ENCODE measurements at regions of chr14 and their contacts with region 1.

Region 1: DNA sequence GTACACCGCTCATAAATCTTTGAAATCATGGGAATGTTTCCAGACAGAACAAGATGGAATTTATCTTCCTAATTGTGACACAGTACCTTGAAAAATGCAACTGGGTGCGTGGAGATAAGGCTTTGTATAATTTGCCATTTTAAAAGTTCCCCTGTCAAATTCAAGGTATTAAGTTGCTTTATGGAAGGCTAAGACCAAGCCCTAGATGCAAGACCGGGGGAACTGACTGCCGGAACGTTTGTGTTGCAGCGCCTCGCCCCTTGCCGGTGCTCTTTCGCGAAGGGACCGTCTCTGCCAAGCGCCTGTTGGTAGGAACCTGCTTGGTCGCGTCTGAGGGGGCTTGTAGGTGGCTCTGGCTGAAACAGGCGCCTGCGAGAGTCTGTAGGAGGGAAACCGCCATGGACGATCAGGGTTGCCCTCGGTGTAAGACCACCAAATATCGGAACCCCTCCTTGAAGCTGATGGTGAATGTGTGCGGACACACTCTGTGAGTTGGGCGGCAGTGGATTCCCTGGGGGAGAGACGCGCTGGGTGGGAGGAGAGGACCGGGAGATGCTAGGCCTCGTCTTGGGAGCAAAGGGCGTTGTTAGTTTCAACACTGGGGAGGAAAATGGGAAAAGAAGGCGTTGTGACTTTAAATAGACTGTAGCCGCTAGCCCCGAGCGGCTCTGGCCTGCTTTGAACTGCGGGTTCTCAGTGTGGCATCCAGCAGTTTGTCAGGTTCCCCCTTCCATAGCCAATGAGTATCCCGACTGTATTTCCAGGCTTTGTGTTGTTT is at the start of gene MNAT1:
- DNase-seq: peak; percentile 88
- ATAC-seq: peak; percentile 96
- H3K4me3 ChIP-seq: peak within 1 kb of the TSS; percentile 99
- H3K27ac ChIP-seq: peak within 1 kb of the TSS; percentile 94
- H3K4me1 ChIP-seq: peaks cover 3% of the 10 kb centered on the region
- H3K27me3 ChIP-seq: no peaks in the 10 kb centered on the region
- CTCF ChIP-seq: no peak
- POLR2A ChIP-seq: peak; percentile 63; the same call in 1 of the 2 replicates
- RAD21 ChIP-seq: peak; percentile 41
- total RNA-seq, gene MNAT1: 48.2 and 53.9 TPM in 2 replicates

Region 2: DNA sequence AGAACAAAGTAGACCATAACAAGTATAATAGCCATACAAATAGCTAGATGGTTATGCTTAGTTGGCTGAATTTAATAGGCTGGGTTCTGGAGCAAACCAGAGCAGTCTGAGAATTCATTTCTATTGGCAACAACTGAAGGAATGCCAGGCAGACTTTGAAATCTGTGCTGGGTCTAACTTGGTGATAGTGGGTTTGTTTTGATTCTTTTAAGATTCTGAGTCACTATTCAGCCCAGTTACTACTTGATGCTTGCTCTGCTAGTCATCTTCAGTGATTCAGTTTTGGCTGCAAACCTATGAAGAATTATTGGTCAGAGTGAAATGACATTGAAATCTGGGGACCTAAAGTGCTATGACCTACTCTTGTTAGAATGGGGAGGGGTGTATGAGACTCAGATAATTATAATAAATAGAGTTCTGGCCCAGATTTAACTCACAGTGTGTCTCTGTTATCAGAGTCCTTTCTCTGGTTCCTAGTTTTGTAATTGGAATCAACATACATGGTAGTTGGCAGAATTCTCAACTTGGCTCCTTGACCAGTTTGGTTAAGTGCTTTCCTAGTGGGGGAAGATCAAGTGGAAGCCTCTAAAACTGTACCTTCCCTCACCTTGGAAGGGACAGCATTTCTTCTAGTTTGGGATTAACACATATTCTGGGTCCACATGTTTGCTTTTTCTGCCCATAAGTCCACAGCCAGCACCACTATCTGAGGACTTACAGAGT is 43.4 kb after region 1 on chr14:
- CTCF ChIA-PET with region 1: no interaction called
- POLR2A ChIA-PET with region 1: no interaction called
- dilution Hi-C with region 1: no loop called
- in situ Hi-C with region 1: no loop called
- intact Hi-C with region 1: loop called (anchors 5 kb)
- DNase-seq: peak; percentile 94
- ATAC-seq: peak; percentile 87
- H3K4me3 ChIP-seq: no peak overlapping the region
- H3K27ac ChIP-seq: no peak overlapping the region
- H3K4me1 ChIP-seq: peaks cover 7% of the 10 kb centered on the region; the same call in 1 of the 2 replicates
- H3K27me3 ChIP-seq: no peaks in the 10 kb centered on the region
- CTCF ChIP-seq: no peak
- POLR2A ChIP-seq: no peak
- RAD21 ChIP-seq: peak; percentile 5; the same call in 1 of the 2 replicates

Region 3: GRCh38 chr14:61258985-61259384 is 524.3 kb after region 1 on chr14:
- CTCF ChIA-PET with region 1: no interaction called
- POLR2A ChIA-PET with region 1: no interaction called
- dilution Hi-C with region 1: no loop called
- in situ Hi-C with region 1: loop called (anchors 5 kb)
- intact Hi-C with region 1: no loop called
- DNase-seq: peak; percentile 21
- ATAC-seq: peak; percentile 48
- H3K4me3 ChIP-seq: no peak overlapping the region
- H3K27ac ChIP-seq: no peak overlapping the region
- H3K4me1 ChIP-seq: peaks cover 10% of the 10 kb centered on the region
- H3K27me3 ChIP-seq: no peaks in the 10 kb centered on the region
- CTCF ChIP-seq: no peak
- POLR2A ChIP-seq: no peak
- RAD21 ChIP-seq: no peak

Measured in IMR-90 (cell line).